ENCODE measurements at regions of chr6 and their contacts with region 1.

Region 1: DNA sequence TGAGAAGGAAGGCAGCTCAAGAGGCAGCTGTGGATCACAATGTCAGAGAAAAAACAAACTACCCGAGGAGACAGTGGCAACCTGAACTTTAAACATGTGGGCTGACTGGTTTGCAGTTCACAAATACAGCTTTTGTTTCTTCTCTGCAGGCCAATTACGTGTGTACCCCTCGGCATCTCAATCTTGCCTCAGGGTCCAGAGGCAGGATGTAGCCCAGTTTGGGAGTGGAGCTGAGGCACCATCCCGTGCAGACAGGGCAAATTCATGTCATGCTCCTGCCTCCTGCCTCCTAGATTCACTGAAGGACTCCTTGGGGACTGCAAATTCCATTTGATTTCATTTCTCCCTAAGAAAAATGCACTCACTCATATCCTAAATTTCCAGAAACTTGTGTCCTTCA is 94.2 kb upstream of the KCNK16 start:
- DNase-seq: no peak
- ATAC-seq: no peak
- H3K4me3 ChIP-seq: no peak overlapping the region
- H3K4me3 Mint-ChIP-seq: no peak overlapping the region
- H3K27ac ChIP-seq: no peak overlapping the region
- H3K27ac Mint-ChIP-seq: no peak overlapping the region
- H3K4me1 ChIP-seq: no peaks in the 10 kb centered on the region
- H3K4me1 Mint-ChIP-seq: no peaks in the 10 kb centered on the region
- H3K27me3 ChIP-seq: peaks cover 0 to 4% of the 10 kb centered on the region in 2 experiments
- H3K27me3 Mint-ChIP-seq: no peaks in the 10 kb centered on the region
- CTCF ChIP-seq: no peak

Region 2: DNA sequence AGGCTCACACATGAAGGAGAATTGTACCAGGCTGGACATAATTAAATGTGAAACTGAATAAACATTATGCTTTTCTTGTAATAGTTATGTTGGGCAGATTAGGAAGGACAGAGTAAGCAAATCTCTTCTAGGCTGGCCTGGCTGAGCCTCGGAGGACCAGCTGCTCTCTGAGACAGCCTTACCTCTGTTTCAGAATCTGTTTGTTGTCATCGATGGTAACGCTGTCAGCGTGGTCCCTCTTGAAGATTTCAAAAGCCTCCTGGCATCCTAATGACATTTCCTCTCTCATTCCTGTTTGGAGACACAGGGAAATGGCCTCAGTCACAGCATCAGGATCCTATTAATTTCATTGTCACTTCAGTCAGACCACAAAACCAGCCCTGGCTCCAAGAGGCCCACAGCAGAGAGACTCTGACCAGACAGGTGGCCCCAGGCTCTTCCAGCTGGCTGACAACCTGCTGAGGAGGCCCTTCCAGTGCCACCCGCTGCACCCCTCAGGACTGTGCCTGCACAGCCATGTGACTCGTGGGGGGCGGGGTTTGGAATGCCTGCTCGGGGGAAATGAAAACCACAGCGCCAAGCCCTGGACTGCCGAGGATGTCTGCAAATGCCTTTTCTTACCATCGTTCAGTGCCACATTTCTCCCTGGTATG is 14.3 kb after region 1 on chr6:
- CTCF ChIA-PET with region 1: no interaction called
- POLR2A ChIA-PET with region 1: no interaction called
- intact Hi-C with region 1: no loop called
- DNase-seq: no peak
- ATAC-seq: no peak
- H3K4me3 ChIP-seq: no peak overlapping the region
- H3K4me3 Mint-ChIP-seq: no peak overlapping the region
- H3K27ac ChIP-seq: no peak overlapping the region
- H3K27ac Mint-ChIP-seq: no peak overlapping the region
- H3K4me1 ChIP-seq: no peaks in the 10 kb centered on the region
- H3K4me1 Mint-ChIP-seq: no peaks in the 10 kb centered on the region
- H3K27me3 ChIP-seq: no peaks in the 10 kb centered on the region
- H3K27me3 Mint-ChIP-seq: no peaks in the 10 kb centered on the region
- CTCF ChIP-seq: no peak

Region 3: GRCh38 chr6:39622690-39623089 is 206.0 kb after region 1 on chr6:
- CTCF ChIA-PET with region 1: no interaction called
- POLR2A ChIA-PET with region 1: no interaction called
- intact Hi-C with region 1: no loop called
- DNase-seq: no peak
- ATAC-seq: no peak
- H3K4me3 ChIP-seq: no peak overlapping the region
- H3K4me3 Mint-ChIP-seq: no peak overlapping the region
- H3K27ac ChIP-seq: no peak overlapping the region
- H3K27ac Mint-ChIP-seq: no peak overlapping the region
- H3K4me1 ChIP-seq: no peaks in the 10 kb centered on the region
- H3K4me1 Mint-ChIP-seq: no peaks in the 10 kb centered on the region
- H3K27me3 ChIP-seq: no peaks in the 10 kb centered on the region
- H3K27me3 Mint-ChIP-seq: peaks cover 31% of the 10 kb centered on the region
- CTCF ChIP-seq: no peak

Region 4: DNA sequence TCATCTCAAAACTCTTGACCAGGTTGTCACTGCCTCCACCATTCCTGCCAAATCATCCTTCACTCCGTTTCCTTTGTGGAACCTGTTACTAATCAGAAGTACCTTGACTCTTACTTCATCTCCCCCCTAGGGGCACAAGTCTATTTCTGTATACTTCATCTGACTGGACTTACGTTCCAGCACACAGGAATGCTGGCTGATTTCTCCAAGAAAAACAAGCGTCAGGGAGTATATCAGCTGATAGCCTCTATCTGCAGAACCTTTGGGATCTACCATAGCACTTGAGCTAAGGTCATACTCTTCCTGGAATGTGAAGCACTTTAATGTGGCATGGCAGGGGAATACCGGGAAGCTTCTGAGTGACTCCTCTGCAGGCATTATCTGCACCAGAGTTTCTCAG is 695.6 kb after region 1 on chr6:
- CTCF ChIA-PET with region 1: no interaction called
- POLR2A ChIA-PET with region 1: no interaction called
- intact Hi-C with region 1: loop called in 1 of 2 experiments (anchors 10 kb)
- DNase-seq: no peak
- ATAC-seq: no peak
- H3K4me3 ChIP-seq: no peak overlapping the region
- H3K4me3 Mint-ChIP-seq: no peak overlapping the region
- H3K27ac ChIP-seq: no peak overlapping the region
- H3K27ac Mint-ChIP-seq: no peak overlapping the region
- H3K4me1 ChIP-seq: no peaks in the 10 kb centered on the region
- H3K4me1 Mint-ChIP-seq: no peaks in the 10 kb centered on the region
- H3K27me3 ChIP-seq: peaks cover 6 to 10% of the 10 kb centered on the region in 2 experiments
- H3K27me3 Mint-ChIP-seq: peaks cover 23% of the 10 kb centered on the region
- CTCF ChIP-seq: no peak